Dendritic cell treated with granulocyte-macrophage colony-stimulating factor and Interleukin-4, amounts not matched to agents 40 ng/mL and 50 ng/mL, for 4 days (primary cell): ENCODE measurements at regions of chr3 and their contacts with region 1.

Region 1: DNA sequence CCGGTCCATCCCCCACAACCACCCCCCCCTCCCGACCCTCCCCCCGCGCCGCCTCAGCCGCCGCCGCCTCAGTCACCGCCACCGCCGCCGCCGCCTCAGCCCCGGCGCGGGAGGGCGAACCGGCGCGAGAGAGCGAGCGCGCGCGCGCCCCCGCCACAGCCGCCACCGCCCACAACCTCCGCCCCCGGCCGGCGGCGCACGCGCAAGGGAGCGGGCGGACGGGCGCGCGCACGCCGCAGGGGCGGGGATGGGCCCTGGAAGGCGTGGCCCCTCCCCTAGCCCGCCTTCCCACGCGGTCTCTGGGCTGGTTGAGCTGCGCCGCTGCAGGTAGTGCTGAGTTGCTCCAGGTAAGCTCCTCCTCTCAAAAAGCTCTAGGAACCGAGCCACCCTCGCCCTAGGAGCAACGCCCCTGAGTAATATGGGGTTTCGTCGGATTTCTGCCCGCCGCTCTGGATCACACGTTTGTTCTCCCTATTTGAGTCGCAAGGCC is at the start of gene TMCC1:
- H3K4me3 Mint-ChIP-seq: peak within 1 kb of the TSS; percentile 83
- H3K27ac Mint-ChIP-seq: peak within 1 kb of the TSS; percentile 87
- H3K4me1 Mint-ChIP-seq: peaks cover 47% of the 10 kb centered on the region
- H3K27me3 Mint-ChIP-seq: no peaks in the 10 kb centered on the region

Region 2: DNA sequence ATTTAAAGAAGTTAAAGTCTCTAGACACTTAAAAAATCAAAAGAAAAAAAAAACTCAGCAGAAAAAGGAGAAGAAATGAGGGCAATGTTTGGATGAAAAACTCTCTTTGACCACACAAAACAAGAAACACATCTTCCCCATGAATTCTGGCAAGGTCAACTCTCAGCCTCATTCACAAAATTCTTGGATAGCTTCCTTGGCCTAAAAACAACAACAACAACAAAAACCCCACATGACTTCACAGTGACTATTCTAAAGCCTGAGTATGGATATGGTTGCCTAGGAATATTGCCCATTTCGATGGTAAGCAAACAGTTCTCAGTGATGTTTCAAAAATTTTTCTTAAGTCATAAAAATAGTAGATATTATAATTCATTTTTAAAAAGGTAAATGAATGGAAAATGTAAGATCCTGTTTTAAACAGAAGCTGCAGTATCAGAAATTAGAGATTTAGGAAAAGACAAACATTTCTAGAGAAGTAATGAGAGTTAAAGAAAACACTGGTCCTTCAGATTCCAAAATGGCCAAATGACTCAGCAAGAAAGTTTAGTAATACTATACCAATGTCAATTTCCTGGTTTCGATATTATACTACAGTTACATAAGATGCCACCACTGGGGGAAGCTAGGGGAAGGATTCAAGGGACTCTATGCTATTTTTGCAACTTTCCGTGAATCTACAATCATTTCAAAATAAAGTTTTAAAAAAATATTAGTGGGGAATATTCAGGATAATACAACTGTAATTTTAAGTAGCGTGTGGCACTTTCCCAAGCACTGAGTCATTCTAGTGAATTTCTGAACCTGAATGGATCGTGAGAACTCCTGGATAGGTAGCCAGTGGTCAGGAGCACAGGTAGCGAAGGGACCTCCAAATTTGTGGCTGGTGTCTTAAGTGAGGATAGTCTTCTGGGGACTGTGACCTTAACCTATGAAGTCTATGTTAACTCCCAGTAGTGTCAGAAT is 37.9 kb before region 1 on chr3:
- intact Hi-C with region 1: loop called (anchors 5 kb)
- H3K4me3 Mint-ChIP-seq: peak overlapping the region; percentile 6
- H3K27ac Mint-ChIP-seq: peak overlapping the region; percentile 84
- H3K4me1 Mint-ChIP-seq: peaks cover 36% of the 10 kb centered on the region
- H3K27me3 Mint-ChIP-seq: no peaks in the 10 kb centered on the region

Region 3: GRCh38 chr3:129911261-129911861 is 17.7 kb after region 1 on chr3:
- intact Hi-C with region 1: loop called (anchors 2 kb)
- H3K4me3 Mint-ChIP-seq: no peak overlapping the region
- H3K27ac Mint-ChIP-seq: peak overlapping the region; percentile 60
- H3K4me1 Mint-ChIP-seq: peaks cover 11% of the 10 kb centered on the region
- H3K27me3 Mint-ChIP-seq: no peaks in the 10 kb centered on the region